Dorsolateral prefrontal cortex (tissue), 120 donors: ENCODE measurements at regions of chr2 and their contacts with region 1.

Region 1: DNA sequence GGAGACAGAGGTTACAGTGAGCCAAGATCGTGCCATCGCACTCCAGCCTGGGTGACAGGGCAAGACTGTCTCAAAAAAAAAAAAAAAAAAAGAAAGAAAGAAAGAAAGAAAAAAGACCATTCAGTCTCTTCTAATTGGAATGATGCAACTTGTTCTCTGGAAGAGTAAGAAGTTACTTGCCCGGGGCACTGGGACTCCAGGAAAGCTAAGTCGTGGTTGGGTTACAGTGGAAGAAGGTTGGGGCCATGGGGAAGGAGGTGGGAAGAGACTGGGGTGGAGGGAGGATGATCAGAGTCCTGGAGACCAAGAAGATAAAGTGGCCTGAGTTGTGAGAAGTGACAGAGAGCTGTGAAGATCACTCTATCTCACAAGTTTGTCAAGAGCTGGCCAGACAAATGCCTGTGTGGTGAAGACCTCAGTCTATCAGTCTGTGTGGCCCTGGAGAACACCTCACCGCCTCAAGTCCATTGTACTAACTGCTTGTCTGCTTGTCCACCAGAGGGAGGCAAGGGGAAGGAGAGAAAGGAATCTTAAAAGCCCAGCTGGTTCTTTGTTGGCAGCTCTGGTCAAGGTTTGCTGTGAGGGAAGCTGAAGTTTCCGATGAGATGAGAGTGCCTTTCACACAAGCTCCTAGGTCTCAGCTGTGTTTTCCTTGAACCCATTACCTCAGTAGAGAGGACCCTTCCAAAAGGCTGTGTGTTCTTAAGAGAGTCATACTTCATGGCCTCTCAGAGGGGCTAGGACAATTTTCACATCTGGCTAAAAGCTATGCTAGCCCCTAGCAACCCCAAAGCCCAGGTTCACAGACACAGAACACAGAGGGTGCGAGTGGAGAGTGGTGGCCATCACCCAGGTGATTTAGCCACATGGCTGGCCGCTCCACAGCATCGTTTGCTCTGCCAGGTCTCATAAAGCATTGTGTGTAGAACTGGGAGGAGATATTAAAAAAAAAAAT is 72.0 kb upstream of the TMEM178A start:
- DNase-seq: peak in 3 of 10 donors; percentile 14 to 62 (median 45)
- H3K4me3 ChIP-seq: no peak overlapping the region
- H3K27ac ChIP-seq: no peak overlapping the region
- H3K27me3 ChIP-seq: no peaks in the 10 kb centered on the region
- CTCF ChIP-seq: peak in 55 of 56 donors; percentile 21 to 79 (median 62)

Region 2: GRCh38 chr2:39608686-39609441 is 15.1 kb after region 1 on chr2:
- intact Hi-C with region 1: no loop called
- DNase-seq: no peak
- H3K4me3 ChIP-seq: peak overlapping the region in 2 of 59 donors; percentile 2 to 4
- H3K27ac ChIP-seq: peak overlapping the region in 40 of 59 donors; percentile 1 to 63 (median 34)
- H3K27me3 ChIP-seq: no peaks in the 10 kb centered on the region
- CTCF ChIP-seq: no peak

Region 3: DNA sequence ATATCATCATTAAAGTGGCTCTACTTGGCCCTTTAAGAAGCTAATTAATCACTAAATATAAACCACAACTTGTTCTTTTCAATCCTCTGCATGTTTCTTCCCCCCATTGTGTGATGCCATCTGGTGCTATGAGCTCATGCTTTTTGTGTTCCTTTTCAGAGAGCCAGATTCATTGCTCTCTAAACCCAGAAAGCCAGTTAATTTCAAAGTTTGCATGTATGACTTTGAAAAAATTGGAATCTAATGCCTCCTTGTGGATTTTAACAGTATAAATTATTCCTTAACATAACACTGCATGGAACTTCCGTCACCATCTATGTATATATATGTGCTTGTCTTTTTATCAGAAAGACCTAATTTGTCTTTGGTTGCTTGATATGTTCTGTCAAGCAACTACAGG is 103.1 kb after region 1 on chr2:
- intact Hi-C with region 1: loop called in 1 of 2 experiments (anchors 5 kb)
- DNase-seq: peak in 2 of 10 donors; percentile 48 to 65
- H3K4me3 ChIP-seq: peak overlapping the region in 11 of 59 donors; percentile 0 to 25 (median 6)
- H3K27ac ChIP-seq: peak overlapping the region in 56 of 59 donors; percentile 6 to 95 (median 65)
- H3K27me3 ChIP-seq: no peaks in the 10 kb centered on the region
- CTCF ChIP-seq: peak in 55 of 56 donors; percentile 29 to 85 (median 63)

Region 4: GRCh38 chr2:39730685-39731302 is 137.1 kb after region 1 on chr2:
- intact Hi-C with region 1: loop called (anchors 5 to 10 kb)
- DNase-seq: no peak
- H3K4me3 ChIP-seq: no peak overlapping the region
- H3K27ac ChIP-seq: peak overlapping the region in 2 of 59 donors; percentile 14 to 16
- H3K27me3 ChIP-seq: no peaks in the 10 kb centered on the region
- CTCF ChIP-seq: peak in 55 of 56 donors; percentile 23 to 77 (median 61)